T-cell (primary cell): ENCODE measurements at regions of chr6 and their contacts with region 1.

Region 1: DNA sequence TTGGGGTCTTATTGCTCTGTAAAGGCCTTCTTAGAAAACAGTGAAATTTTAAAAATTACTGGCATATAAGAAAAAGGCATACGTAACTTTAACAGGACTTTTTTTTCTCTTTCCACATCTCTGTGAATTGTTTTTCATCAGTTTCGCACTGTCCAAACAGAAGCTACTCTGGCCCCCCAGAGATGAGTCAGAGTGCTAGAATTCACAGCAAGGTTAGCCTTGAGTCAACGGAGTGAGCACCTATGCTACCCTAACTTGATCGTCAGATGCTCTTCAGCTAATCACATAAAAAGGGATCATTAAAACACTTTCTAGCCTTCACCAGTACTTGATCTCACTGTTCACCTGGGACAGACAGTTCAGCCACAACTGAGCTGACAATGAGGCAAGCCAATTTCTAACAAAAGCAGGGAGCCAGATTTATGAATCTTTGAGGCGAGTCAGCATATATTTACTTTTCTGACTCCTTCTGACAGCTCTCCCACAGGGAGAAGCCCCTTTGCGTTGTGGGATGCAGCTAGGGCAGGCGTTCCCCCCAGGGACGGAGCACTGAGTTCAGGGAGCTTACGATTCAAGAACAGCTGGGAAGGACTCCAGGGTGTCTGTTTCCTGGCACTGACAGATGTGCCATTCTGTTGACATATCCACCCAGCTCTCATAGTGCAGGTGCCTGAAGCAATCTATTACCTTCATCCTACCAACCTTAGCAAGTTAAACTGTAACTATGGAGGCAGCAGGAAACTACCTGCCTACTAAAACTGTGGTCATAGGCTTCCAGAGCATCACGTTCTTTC is 46.4 kb upstream of the SPDEF start:
- DNase-seq: no peak
- ATAC-seq: no peak
- H3K4me3 ChIP-seq: no peak overlapping the region
- H3K4me3 Mint-ChIP-seq: no peak overlapping the region
- H3K27ac ChIP-seq: no peak overlapping the region
- H3K27ac Mint-ChIP-seq: no peak overlapping the region
- H3K4me1 ChIP-seq: peaks cover 0 to 6% of the 10 kb centered on the region in 2 experiments
- H3K4me1 Mint-ChIP-seq: peaks cover 26 to 54% (median 45%) of the 10 kb centered on the region in 3 donors
- H3K27me3 ChIP-seq: no peaks in the 10 kb centered on the region
- H3K27me3 Mint-ChIP-seq: no peaks in the 10 kb centered on the region

Region 2: DNA sequence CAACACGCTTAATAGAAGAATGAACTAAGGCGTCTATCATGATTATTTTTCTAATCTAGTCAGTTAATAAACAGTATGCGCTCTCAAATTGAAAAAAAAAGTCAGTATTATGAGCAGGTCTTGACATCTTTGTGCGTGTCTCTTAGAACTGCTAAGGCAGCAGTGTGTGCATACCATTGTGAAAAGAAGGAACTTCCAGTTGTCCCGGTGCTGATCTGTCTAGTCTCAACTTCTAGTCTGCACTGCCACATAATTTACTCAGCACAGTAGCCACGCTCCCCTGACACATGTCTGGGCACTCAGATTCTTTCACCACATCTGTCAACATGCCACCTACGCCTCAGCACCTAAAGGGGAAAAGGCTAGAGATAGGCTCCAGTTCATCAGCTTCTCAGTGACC is 14.7 kb after region 1 on chr6:
- CTCF ChIA-PET with region 1: no interaction called
- POLR2A ChIA-PET with region 1: no interaction called
- DNase-seq: no peak
- ATAC-seq: no peak
- H3K4me3 ChIP-seq: no peak overlapping the region
- H3K4me3 Mint-ChIP-seq: no peak overlapping the region
- H3K27ac ChIP-seq: no peak overlapping the region
- H3K27ac Mint-ChIP-seq: peak overlapping the region in 1 of 2 donors; percentile 1
- H3K4me1 ChIP-seq: no peaks in the 10 kb centered on the region
- H3K4me1 Mint-ChIP-seq: peaks cover 15 to 29% (median 27%) of the 10 kb centered on the region in 3 donors
- H3K27me3 ChIP-seq: no peaks in the 10 kb centered on the region
- H3K27me3 Mint-ChIP-seq: no peaks in the 10 kb centered on the region

Region 3: GRCh38 chr6:34638834-34639736 is 36.6 kb after region 1 on chr6:
- CTCF ChIA-PET with region 1: no interaction called
- POLR2A ChIA-PET with region 1: interaction called in 1 of 2 experiments, 16 read pairs
- DNase-seq: no peak
- ATAC-seq: no peak
- H3K4me3 ChIP-seq: no peak overlapping the region
- H3K4me3 Mint-ChIP-seq: no peak overlapping the region
- H3K27ac ChIP-seq: no peak overlapping the region
- H3K27ac Mint-ChIP-seq: peak overlapping the region in 1 of 2 donors; percentile 0
- H3K4me1 ChIP-seq: no peaks in the 10 kb centered on the region
- H3K4me1 Mint-ChIP-seq: peaks cover 2 to 27% (median 14%) of the 10 kb centered on the region in 3 donors
- H3K27me3 ChIP-seq: no peaks in the 10 kb centered on the region
- H3K27me3 Mint-ChIP-seq: no peaks in the 10 kb centered on the region

Region 4: DNA sequence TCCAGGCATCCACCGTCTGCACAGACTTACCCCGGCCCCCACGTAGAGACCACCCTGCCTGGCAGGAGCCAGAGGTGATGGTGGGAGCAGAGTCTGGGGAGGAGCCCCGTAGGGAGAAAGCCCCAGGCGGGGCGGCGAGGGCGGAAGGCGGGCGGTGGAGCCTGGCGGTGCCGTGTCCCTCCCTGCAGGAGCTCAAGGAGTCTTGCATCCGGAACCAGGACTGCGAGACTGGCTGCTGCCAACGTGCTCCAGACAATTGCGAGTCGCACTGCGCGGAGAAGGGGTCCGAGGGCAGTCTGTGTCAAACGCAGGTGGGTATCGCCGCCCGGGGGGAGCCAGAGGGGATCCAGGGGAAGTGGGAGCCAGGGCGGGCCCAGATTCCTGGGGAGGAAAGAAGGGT is 1184.3 kb after region 1 on chr6:
- CTCF ChIA-PET with region 1: no interaction called
- POLR2A ChIA-PET with region 1: interaction called in 1 of 2 experiments, 11 read pairs
- DNase-seq: no peak
- ATAC-seq: no peak
- H3K4me3 ChIP-seq: no peak overlapping the region
- H3K4me3 Mint-ChIP-seq: no peak overlapping the region
- H3K27ac ChIP-seq: no peak overlapping the region
- H3K27ac Mint-ChIP-seq: no peak overlapping the region
- H3K4me1 ChIP-seq: no peaks in the 10 kb centered on the region
- H3K4me1 Mint-ChIP-seq: no peaks in the 10 kb centered on the region
- H3K27me3 ChIP-seq: peaks cover 0 to 33% of the 10 kb centered on the region in 2 experiments
- H3K27me3 Mint-ChIP-seq: peaks cover 28 to 63% of the 10 kb centered on the region in 2 donors